PC-9 (cell line): ENCODE measurements at regions of chr10 and their contacts with region 1.

Region 1: DNA sequence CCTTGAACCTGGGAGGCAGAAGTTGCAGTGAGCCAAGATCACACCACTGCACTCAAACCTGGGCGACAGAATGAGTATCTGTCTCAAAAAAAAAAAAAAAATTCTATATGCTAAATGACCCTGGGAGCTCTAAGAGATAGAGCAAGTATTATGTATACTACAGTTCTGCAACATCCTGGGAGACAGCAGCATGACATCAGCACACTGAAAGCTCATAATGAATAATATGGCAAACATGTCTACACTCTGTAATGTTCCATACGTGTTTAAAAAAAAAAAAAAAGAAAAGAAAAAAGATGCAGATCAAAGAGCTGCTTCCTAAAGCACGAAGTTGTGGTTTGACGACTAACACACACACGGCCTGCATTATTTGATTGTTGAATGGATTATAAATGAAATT is 72.5 kb downstream of the CUL2 start:
- DNase-seq: no peak
- H3K4me3 ChIP-seq: no peak overlapping the region
- H3K27ac ChIP-seq: no peak overlapping the region
- H3K4me1 ChIP-seq: no peaks in the 10 kb centered on the region
- H3K27me3 ChIP-seq: no peaks in the 10 kb centered on the region
- CTCF ChIP-seq: no peak

Region 2: DNA sequence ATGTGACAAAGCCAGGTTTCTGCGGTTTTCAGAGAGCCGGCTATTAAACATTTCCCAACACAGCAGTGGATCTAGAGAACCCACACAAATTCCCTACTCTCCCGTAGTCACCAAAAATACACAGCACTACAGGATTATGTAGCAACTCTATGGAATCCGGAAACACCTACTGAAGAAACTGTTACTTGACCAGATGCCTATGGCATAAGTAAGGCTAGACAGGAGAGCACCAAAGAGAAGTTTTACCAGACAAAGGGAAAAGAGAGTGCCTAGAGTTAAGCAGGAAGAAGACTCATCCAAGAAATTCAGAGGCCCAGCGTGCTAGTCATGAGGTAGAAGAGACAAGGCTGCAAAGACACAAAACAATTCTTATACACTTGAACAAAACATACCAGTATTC is 523.6 kb before region 1 on chr10:
- CTCF ChIA-PET with region 1: no interaction called
- POLR2A ChIA-PET with region 1: interaction called, 12 read pairs
- intact Hi-C with region 1: no loop called
- DNase-seq: peak; percentile 28 to 86
- H3K4me3 ChIP-seq: no peak overlapping the region
- H3K27ac ChIP-seq: peak overlapping the region; percentile 59
- H3K4me1 ChIP-seq: peaks cover 17% of the 10 kb centered on the region
- H3K27me3 ChIP-seq: no peaks in the 10 kb centered on the region
- CTCF ChIP-seq: no peak